Sigmoid colon (tissue), 7 donors: ENCODE measurements at regions of chr12 and their contacts with region 1.

Region 1: GRCh38 chr12:101939856-101940265 is 62.5 kb downstream of the DRAM1 start:
- DNase-seq: peak; percentile 86
- H3K4me3 ChIP-seq: no peak overlapping the region
- H3K27ac ChIP-seq: peak overlapping the region in 2 of 4 donors; percentile 12 to 63
- H3K4me1 ChIP-seq: peaks cover 0 to 22% (median 16%) of the 10 kb centered on the region in 4 donors
- H3K27me3 ChIP-seq: no peaks in the 10 kb centered on the region
- CTCF ChIP-seq: peak; percentile 56 to 74 (median 70)
- EP300 ChIP-seq: no peak
- POLR2A ChIP-seq: no peak

Region 2: DNA sequence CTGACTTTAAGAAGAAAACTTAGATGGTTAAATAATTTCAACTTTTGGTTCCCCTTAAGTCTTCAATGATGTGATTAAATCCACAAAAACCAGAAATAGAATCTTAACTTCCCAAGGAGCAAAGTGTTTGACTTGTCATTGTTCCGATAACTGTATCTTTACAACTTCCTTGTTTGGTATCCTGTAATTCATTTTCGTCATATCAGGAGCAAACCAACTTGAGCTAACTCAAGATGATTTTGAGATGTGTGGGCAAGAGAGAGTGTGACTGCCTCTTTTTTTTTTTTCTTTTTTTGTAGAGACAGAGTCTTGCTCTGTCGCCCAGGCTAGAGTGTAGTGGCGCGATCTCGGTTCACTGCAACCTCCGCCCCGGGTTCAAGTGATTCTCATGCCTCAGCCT is 37.2 kb before region 1 on chr12:
- intact Hi-C with region 1: no loop called
- DNase-seq: no peak
- H3K4me3 ChIP-seq: no peak overlapping the region
- H3K27ac ChIP-seq: no peak overlapping the region
- H3K4me1 ChIP-seq: no peaks in the 10 kb centered on the region
- H3K27me3 ChIP-seq: no peaks in the 10 kb centered on the region
- CTCF ChIP-seq: no peak
- EP300 ChIP-seq: no peak
- POLR2A ChIP-seq: no peak

Region 3: GRCh38 chr12:102023343-102023930 is 83.6 kb after region 1 on chr12:
- intact Hi-C with region 1: loop called (anchors 5 kb)
- DNase-seq: no peak
- H3K4me3 ChIP-seq: no peak overlapping the region
- H3K27ac ChIP-seq: peak overlapping the region; percentile 61 to 79 (median 68)
- H3K4me1 ChIP-seq: peaks cover 0 to 46% (median 26%) of the 10 kb centered on the region in 4 donors
- H3K27me3 ChIP-seq: no peaks in the 10 kb centered on the region
- CTCF ChIP-seq: no peak
- EP300 ChIP-seq: peak in 1 of 4 donors; percentile 29
- POLR2A ChIP-seq: no peak

Region 4: GRCh38 chr12:102061560-102062418 is 121.9 kb after region 1 on chr12 and contains the start of gene WASHC3:
- intact Hi-C with region 1: loop called (anchors 5 kb)
- DNase-seq: peak; percentile 98
- H3K4me3 ChIP-seq: peak within 1 kb of the TSS; percentile 84 to 92 (median 88)
- H3K27ac ChIP-seq: peak within 1 kb of the TSS; percentile 90 to 93 (median 91)
- H3K4me1 ChIP-seq: peaks cover 0 to 9% (median 6%) of the 10 kb centered on the region in 4 donors
- H3K27me3 ChIP-seq: no peaks in the 10 kb centered on the region
- CTCF ChIP-seq: no peak
- EP300 ChIP-seq: no peak
- POLR2A ChIP-seq: peak; percentile 73 to 74
- total RNA-seq, gene WASHC3: 90.0 to 115 (median 95.6) TPM

Region 5: DNA sequence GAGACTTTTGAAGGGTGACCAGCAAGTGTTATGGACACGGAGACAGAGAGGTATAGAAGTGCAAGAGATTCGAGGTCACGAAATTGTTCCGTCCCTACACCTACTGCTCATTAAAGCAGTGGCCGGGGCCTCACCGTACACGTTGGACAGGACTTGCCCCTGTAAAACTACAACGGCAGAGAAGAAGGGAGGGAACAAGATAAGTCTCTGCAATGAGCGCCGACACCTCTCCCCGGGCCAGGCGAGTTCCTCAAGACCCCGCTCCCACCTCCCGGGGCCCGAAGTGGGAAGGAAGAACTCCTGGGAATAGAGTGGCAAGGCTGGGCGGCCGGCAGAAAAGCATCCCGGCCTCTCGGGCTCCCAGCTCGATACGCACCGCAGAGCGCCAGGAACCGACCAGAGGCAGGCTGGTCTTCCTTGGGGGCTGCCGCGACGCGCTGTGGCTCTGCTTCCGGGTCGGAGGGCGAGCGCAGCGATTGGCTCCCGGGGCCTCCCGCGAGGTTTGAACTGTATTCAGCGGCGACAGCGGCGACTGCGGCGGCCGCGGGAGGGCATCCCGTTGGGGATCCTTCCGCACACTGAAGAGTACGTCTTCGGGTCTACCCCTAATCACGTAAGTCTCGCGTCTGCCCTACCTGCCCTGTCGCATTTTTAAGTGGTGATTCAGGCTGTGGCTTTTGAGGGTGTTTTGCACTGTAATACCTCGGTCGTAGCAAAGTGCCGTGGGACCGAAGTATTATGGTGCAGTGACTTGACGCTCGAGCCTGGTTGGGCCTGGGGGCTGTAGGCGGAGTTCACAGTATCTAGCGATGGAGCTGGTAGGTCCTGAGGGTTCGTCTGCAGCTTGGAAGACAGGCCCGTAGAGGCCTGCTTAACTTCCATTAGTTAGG is 180.1 kb after region 1 on chr12 and contains the starts of genes NUP37 and PARPBP:
- intact Hi-C with region 1: loop called (anchors 5 kb)
- DNase-seq: peak; percentile 94
- H3K4me3 ChIP-seq: peak within 1 kb of the TSS; percentile 65 to 76 (median 72)
- H3K27ac ChIP-seq: peak within 1 kb of the TSS; percentile 85 to 89 (median 88)
- H3K4me1 ChIP-seq: peaks cover 0 to 21% (median 14%) of the 10 kb centered on the region in 4 donors
- H3K27me3 ChIP-seq: no peaks in the 10 kb centered on the region
- CTCF ChIP-seq: no peak
- EP300 ChIP-seq: no peak
- POLR2A ChIP-seq: peak; percentile 44 to 47
- total RNA-seq, gene NUP37: 16.1 to 24.3 (median 18.6) TPM
- total RNA-seq, gene PARPBP: 1.8 to 2.3 (median 1.9) TPM

Region 6: DNA sequence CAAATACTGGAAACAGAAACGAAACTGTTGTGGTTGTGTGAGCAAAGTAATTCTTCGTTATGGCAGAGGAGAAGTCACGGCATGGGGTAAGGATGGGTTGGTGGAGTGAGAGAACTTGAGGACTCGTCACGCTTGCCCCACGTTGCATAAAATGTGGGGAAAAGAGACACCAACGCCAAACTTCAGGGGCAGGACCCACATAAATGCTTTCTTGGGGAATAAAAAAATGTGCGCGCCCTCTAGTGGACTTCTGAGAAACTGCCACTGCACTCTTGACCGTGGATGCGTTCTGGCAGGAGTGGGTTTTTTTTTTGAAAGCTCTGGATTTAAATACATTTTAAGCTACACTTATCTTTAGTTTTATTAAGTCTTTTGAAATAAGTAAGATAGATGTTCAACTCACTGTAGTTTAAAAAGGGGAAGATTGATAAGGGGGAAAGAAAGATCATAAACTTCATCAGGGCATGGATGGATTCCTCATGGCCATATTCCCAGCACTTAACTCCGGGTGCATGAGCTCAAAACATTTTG is 544.6 kb after region 1 on chr12:
- intact Hi-C with region 1: loop called (anchors 2 kb)
- DNase-seq: peak; percentile 76
- H3K4me3 ChIP-seq: peak overlapping the region in 1 of 4 donors; percentile 18
- H3K27ac ChIP-seq: peak overlapping the region in 2 of 4 donors; percentile 41 to 47
- H3K4me1 ChIP-seq: peaks cover 0 to 25% (median 13%) of the 10 kb centered on the region in 4 donors
- H3K27me3 ChIP-seq: no peaks in the 10 kb centered on the region
- CTCF ChIP-seq: peak; percentile 43 to 91 (median 56)
- EP300 ChIP-seq: no peak
- POLR2A ChIP-seq: no peak